ENCODE measurements at regions of chr10 and their contacts with region 1.

Region 1: GRCh38 chr10:15369256-15370211 is 1.6 kb downstream of the FAM171A1 start:
- DNase-seq: no peak
- ATAC-seq: peak; percentile 65
- H3K4me3 ChIP-seq: peak overlapping the region; percentile 54 to 55
- H3K27ac ChIP-seq: peak overlapping the region; percentile 68
- H3K4me1 ChIP-seq: peaks cover 6% of the 10 kb centered on the region; the same call in 1 of the 2 replicates
- H3K27me3 ChIP-seq: no peaks in the 10 kb centered on the region
- CTCF ChIP-seq: no peak

Region 2: GRCh38 chr10:15209827-15210509 is 159.6 kb before region 1 on chr10:
- CTCF ChIA-PET with region 1: no interaction called
- POLR2A ChIA-PET with region 1: no interaction called
- in situ Hi-C with region 1: no loop called
- intact Hi-C with region 1: loop called (anchors 2 kb)
- DNase-seq: peak; percentile 48
- ATAC-seq: peak; percentile 94
- H3K4me3 ChIP-seq: no peak overlapping the region
- H3K27ac ChIP-seq: no peak overlapping the region
- H3K4me1 ChIP-seq: no peaks in the 10 kb centered on the region
- H3K27me3 ChIP-seq: no peaks in the 10 kb centered on the region
- CTCF ChIP-seq: peak; percentile 88

Region 3: DNA sequence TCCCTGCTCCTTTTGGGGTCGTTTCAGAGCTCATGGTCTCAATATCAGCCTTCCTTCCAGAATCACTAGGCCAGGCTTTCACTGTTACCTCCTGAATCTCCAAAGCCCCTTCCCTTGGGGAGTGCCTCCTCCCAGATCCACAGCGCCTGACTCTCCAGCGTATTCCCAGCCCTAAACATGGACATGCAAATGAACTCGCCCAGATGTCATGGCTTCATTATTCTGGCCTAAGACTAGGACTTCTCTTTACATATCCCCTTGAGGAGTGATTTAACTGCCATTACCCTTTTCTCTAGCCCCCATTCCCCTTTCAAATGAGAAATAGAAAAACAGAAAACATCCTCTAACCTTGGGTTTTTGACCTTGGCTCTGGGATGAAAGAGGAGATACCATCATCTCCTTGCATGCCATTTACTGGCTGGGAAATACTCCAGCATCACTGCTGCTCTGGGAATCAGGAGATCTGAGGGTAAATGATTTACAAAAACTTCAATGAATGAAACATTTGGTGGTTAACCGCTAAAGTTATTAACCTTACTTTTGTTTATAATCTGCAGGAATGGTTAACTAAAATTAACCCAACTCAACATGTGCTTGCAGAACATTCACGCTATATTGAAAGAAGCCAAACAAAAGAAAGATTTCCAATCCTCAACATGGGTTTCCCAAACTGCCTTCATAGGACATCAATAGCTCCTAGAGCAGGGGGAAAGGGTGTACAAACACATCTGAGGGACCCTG is 35.5 kb before region 1 on chr10:
- CTCF ChIA-PET with region 1: no interaction called
- POLR2A ChIA-PET with region 1: no interaction called
- in situ Hi-C with region 1: no loop called
- intact Hi-C with region 1: no loop called
- DNase-seq: no peak
- ATAC-seq: no peak
- H3K4me3 ChIP-seq: no peak overlapping the region
- H3K27ac ChIP-seq: no peak overlapping the region
- H3K4me1 ChIP-seq: no peaks in the 10 kb centered on the region
- H3K27me3 ChIP-seq: no peaks in the 10 kb centered on the region
- CTCF ChIP-seq: no peak